Breast epithelium (tissue), 4 donors: ENCODE measurements at regions of chr17 and their contacts with region 1.

Region 1: DNA sequence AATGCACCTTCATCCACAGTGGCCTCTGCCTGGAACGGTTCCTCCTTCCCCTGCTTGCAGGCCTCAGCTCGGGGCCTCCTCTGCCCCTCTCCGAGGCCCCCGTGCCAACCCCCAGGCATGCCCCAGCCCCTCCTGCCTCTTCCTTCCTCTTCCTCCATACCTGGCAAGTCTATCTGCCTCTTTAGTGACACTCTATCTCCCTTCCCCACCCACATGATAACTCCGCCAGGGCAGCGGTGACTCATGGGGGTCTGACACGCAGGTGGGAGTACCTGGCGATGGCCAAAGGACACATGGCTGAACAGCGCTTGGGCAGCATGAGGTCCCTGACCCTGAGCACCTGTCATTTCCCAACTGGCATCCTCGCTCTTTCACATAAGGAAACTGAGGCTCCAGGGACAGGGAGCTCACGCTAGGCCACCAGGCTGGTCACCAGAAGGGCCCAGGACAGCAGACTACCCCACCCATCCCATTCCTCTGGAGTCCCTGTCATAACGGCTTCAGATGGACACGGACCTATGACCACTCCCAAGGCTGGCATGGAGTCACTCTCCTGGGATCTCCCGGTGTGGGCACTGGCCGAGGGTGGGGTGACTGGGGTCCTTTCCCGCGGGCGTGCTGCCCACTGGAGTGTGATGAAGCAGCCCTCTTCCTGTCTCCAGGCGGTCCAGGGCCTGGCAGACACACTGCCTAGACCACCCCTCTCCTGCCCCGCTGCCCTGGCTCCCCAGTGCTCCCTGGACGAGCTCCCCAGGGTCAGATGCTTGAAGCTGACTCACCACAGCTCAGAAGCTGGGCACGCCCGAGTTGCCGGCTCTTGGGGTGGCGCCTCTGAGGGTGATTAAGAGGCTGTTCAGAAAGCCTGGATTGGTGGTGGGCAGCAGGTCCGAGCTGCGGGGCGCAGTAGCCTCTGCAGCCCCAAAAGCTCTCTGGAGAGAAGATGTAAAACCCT is 100.6 kb downstream of the ENGASE start:
- DNase-seq: no peak
- H3K4me3 ChIP-seq: no peak overlapping the region
- H3K27ac ChIP-seq: no peak overlapping the region
- H3K4me1 ChIP-seq: no peaks in the 10 kb centered on the region
- H3K27me3 ChIP-seq: peaks cover 0 to 55% of the 10 kb centered on the region in 2 donors
- CTCF ChIP-seq: no peak
- POLR2A ChIP-seq: no peak

Region 2: GRCh38 chr17:77909236-77909635 is 1265.9 kb before region 1 on chr17:
- intact Hi-C with region 1: loop called (anchors 5 kb)
- DNase-seq: peak; percentile 35 to 54
- H3K4me3 ChIP-seq: peak overlapping the region in 2 of 3 donors; percentile 9 to 42
- H3K27ac ChIP-seq: no peak overlapping the region
- H3K4me1 ChIP-seq: no peaks in the 10 kb centered on the region
- H3K27me3 ChIP-seq: peaks cover 0 to 27% of the 10 kb centered on the region in 2 donors
- CTCF ChIP-seq: no peak
- POLR2A ChIP-seq: no peak

Region 3: GRCh38 chr17:79220713-79221291 is 45.6 kb after region 1 on chr17:
- intact Hi-C with region 1: no loop called
- DNase-seq: no peak
- H3K4me3 ChIP-seq: no peak overlapping the region
- H3K27ac ChIP-seq: no peak overlapping the region
- H3K4me1 ChIP-seq: no peaks in the 10 kb centered on the region
- H3K27me3 ChIP-seq: peaks cover 0 to 100% of the 10 kb centered on the region in 2 donors
- CTCF ChIP-seq: no peak
- POLR2A ChIP-seq: no peak